ENCODE measurements at regions of chr7 and their contacts with region 1.

Region 1: GRCh38 chr7:80060218-80060806 is 74.3 kb upstream of the GNAI1 start:
- DNase-seq: no peak
- ATAC-seq: no peak
- H3K4me3 ChIP-seq: no peak overlapping the region
- H3K4me1 ChIP-seq: no peaks in the 10 kb centered on the region
- CTCF ChIP-seq: no peak

Region 2: GRCh38 chr7:80124526-80125264 is 64.4 kb after region 1 on chr7:
- intact Hi-C with region 1: no loop called
- DNase-seq: no peak
- ATAC-seq: no peak
- H3K4me3 ChIP-seq: no peak overlapping the region
- H3K4me1 ChIP-seq: peaks cover 2% of the 10 kb centered on the region
- CTCF ChIP-seq: no peak

Region 3: GRCh38 chr7:80277434-80278427 is 217.4 kb after region 1 on chr7:
- intact Hi-C with region 1: no loop called
- DNase-seq: peak in 1 of 3 donors; percentile 35
- ATAC-seq: peak; percentile 93
- H3K4me3 ChIP-seq: no peak overlapping the region
- H3K4me1 ChIP-seq: peaks cover 6% of the 10 kb centered on the region
- CTCF ChIP-seq: no peak

Region 4: DNA sequence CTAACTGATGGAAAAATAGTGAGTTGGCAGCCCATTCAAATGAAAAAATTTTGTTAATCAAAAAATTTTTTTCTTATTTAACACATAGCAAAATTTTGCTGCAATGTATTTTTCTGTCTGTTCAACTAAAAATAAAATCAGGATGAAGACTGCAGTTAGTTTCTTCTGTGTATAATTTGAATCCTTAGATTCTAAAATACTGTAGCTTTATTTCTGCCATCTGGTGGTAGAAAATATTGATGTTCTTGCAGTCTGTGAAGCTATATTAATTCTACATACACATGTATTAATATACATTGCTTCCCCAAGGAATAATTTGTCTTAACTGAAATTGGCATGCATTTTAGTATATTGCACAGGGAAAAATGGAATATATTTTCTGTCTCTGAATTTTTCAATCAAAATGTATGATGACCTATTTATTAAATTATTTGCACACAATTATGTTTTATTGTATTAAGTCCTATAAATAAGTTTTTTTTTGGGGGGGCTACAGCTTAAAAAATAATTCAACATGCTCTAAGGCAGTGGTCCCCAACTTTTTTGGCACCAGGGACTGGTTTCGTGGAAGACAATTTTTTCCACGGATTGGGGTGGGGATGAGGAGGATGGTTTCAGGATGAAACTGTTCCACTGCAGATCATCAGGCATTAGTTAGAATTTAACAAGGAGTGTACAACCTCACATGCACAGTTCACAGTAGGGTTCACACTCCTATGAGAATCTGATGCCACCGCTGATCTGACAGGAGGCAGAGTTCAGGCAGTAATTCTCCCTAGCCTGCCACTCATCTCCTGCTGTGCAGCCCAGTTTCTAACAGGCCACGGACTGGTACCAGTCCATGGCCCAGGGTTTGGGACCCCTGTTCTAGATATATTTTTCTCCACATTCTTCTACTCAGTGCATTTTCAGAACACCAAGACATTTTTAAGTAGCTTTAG is 332.2 kb after region 1 on chr7:
- intact Hi-C with region 1: loop called in 1 of 2 experiments (anchors 10 kb)
- DNase-seq: no peak
- ATAC-seq: no peak
- H3K4me3 ChIP-seq: no peak overlapping the region
- H3K4me1 ChIP-seq: no peaks in the 10 kb centered on the region
- CTCF ChIP-seq: no peak